ENCODE measurements at regions of chr5 and their contacts with region 1.

Region 1: GRCh38 chr5:95730730-95731570 is at the start of gene RHOBTB3:
- DNase-seq: peak; percentile 88
- H3K4me3 ChIP-seq: peak within 1 kb of the TSS; percentile 35 to 95 (median 74)
- H3K27ac ChIP-seq: peak within 1 kb of the TSS; percentile 56
- H3K4me1 ChIP-seq: peaks cover 47% of the 10 kb centered on the region
- H3K27me3 ChIP-seq: no peaks in the 10 kb centered on the region
- CTCF ChIP-seq: peak in 1 of 2 donors; percentile 1
- POLR2A ChIP-seq: peak; percentile 39
- total RNA-seq, gene RHOBTB3: 37.6 and 44.1 TPM in 2 replicates

Region 2: DNA sequence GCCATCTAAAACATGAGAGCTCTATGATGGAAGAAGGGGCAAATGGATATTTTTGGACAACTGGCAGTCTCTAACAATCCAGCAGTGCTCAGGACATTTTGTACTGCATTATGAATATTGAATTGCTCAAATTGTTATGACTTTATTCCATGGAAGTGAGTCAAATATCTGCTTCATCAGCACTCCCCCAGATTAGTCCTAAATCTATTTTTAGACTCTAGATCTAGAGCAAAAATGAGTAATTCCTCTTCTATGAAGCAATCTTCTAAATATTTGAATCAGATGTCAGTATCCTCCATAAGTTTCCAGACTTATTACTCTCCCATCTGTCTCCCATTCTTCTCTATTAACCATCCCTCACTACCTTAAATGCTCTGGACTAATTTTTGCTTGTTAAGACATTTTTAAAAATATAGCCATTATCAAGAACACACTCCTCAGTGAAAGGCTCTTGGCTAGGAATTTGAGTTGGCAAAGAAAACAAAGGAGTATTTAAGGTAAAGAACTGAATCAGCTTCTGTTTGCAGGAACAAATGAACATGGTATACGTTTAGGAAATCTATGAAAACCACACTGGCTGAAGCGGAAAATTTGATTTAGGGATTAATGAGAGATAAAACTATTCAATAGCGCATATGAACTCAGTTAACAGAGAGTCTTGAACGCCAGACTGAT is 747.0 kb before region 1 on chr5:
- CTCF ChIA-PET with region 1: no interaction called
- POLR2A ChIA-PET with region 1: no interaction called
- dilution Hi-C with region 1: no loop called
- intact Hi-C with region 1: no loop called
- DNase-seq: no peak
- H3K4me3 ChIP-seq: no peak overlapping the region
- H3K27ac ChIP-seq: no peak overlapping the region
- H3K4me1 ChIP-seq: peaks cover 3% of the 10 kb centered on the region
- H3K27me3 ChIP-seq: no peaks in the 10 kb centered on the region
- CTCF ChIP-seq: no peak
- POLR2A ChIP-seq: no peak

Region 3: DNA sequence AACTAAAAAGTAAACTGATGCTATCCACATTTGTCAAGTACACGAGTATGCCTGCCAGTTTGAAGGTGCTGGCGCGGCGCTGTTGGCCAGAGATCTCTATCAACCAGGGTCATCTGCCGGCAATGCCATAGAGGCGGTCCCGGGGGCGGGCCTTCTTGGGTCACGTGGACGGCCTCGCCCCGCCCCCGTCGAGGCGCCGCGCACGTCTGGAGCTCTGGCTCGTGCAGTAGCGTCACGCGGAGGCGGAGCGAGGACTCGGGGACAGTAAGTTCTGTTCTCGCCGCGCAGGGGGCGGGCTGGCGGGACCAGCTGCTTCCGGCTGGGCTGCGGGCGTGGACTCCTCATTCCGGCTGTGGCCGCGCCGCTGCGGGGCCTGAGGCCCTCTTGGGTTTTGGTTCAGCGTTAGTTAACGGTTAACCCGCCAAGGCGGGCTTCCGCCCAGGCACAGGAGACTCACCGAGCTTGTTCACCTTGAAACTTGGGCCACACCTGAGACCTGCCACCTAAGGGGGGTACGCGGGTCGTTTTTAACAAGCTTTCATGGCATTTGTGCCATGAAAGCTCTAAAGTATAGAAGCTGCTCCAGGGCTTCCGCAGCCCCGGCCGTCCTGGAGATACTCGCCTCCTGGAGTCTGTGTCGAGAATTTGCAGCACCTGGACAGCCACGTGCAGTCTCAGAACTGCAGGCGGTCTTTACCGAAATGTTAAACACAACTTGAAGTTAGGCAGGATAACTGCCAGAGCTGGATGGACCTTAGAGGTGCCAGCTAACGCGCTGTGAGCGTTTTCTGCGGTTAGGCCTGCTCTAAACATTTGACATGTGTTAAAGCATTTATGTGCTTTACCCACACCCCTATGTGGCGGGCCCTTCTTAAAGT is 84.2 kb before region 1 on chr5 and contains the start of gene RFESD:
- CTCF ChIA-PET with region 1: interaction called, 4 read pairs
- POLR2A ChIA-PET with region 1: interaction called, 6 read pairs
- dilution Hi-C with region 1: no loop called
- intact Hi-C with region 1: loop called (anchors 1 kb)
- DNase-seq: peak; percentile 89
- H3K4me3 ChIP-seq: peak within 1 kb of the TSS; percentile 61 to 75 (median 67)
- H3K27ac ChIP-seq: peak within 1 kb of the TSS; percentile 91
- H3K4me1 ChIP-seq: peaks cover 9% of the 10 kb centered on the region
- H3K27me3 ChIP-seq: no peaks in the 10 kb centered on the region
- CTCF ChIP-seq: peak in 1 of 2 donors; percentile 2
- POLR2A ChIP-seq: peak; percentile 86
- total RNA-seq, gene RFESD: 1.1 and 2.0 TPM in 2 replicates

Region 4: DNA sequence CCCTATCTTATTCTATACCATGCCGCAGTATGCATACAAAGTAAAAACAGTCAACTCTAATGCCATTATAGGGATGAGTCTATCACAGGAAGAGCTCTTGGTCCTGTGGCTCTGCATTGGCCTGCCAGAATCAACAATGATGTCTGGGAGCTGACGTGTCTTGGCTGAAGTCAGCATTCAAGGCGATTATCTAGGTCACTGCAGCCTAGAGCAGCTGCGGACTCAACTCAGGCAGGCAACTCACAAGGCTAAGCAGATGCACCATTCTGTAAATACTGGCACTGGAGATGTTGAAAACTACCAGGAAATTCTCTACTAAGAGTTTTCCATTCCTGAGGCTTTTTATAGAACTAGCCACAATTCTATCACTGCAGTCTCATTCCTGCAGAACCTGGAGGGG is 61.4 kb before region 1 on chr5:
- CTCF ChIA-PET with region 1: interaction called, 18 read pairs
- POLR2A ChIA-PET with region 1: interaction called, 4 read pairs
- dilution Hi-C with region 1: no loop called
- intact Hi-C with region 1: loop called (anchors 1 kb)
- DNase-seq: peak; percentile 84
- H3K4me3 ChIP-seq: no peak overlapping the region
- H3K27ac ChIP-seq: peak overlapping the region; percentile 69
- H3K4me1 ChIP-seq: peaks cover 23% of the 10 kb centered on the region
- H3K27me3 ChIP-seq: no peaks in the 10 kb centered on the region
- CTCF ChIP-seq: no peak
- POLR2A ChIP-seq: no peak

Region 5: GRCh38 chr5:95760273-95761191 is 29.6 kb after region 1 on chr5:
- CTCF ChIA-PET with region 1: interaction called, 7 read pairs
- POLR2A ChIA-PET with region 1: interaction called, 6 read pairs
- dilution Hi-C with region 1: no loop called
- intact Hi-C with region 1: loop called (anchors 2 kb)
- DNase-seq: peak; percentile 78
- H3K4me3 ChIP-seq: peak overlapping the region in 1 of 3 experiments; percentile 17
- H3K27ac ChIP-seq: peak overlapping the region; percentile 78
- H3K4me1 ChIP-seq: peaks cover 36% of the 10 kb centered on the region
- H3K27me3 ChIP-seq: no peaks in the 10 kb centered on the region
- CTCF ChIP-seq: no peak
- POLR2A ChIP-seq: no peak

Region 6: DNA sequence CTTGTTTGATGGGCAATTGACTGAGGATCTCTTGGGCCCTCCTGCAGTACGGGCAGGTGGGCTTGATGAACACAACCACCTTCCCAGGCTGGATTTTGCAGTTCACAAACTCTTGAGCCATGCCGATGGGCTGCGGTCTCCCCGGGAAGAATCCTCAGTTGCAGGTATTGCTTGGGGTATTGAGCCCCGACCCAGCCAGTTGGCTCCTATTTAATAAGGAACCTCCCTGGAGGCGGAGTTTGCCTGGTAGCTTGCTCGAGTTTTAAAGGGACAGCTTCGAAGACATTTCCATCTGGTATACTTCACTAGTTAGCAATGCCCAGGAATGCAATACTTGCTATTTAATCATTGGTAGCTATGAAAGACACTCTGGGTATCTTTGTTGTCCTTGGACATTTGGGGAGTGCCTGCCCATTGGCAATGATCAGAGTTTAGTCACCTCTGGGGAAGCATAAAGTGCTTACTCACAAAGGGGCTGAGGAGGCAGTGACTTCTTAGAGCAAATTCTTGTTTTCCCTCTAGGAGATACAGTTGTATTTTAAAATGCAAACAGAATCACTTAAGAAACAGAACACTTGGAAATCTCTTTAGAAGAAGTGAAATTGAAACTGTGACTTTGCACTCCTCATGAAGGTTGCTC is 91.7 kb after region 1 on chr5 and contains the start of gene GLRX:
- CTCF ChIA-PET with region 1: no interaction called
- POLR2A ChIA-PET with region 1: interaction called, 4 read pairs
- dilution Hi-C with region 1: no loop called
- intact Hi-C with region 1: loop called (anchors 5 kb)
- DNase-seq: peak; percentile 82
- H3K4me3 ChIP-seq: peak within 1 kb of the TSS; percentile 63 to 80 (median 69)
- H3K27ac ChIP-seq: peak within 1 kb of the TSS; percentile 54
- H3K4me1 ChIP-seq: peaks cover 26% of the 10 kb centered on the region
- H3K27me3 ChIP-seq: no peaks in the 10 kb centered on the region
- CTCF ChIP-seq: no peak
- POLR2A ChIP-seq: peak; percentile 42
- total RNA-seq, gene GLRX: 13.3 and 14.2 TPM in 2 replicates

Region 7: GRCh38 chr5:95961617-95962474 is 230.9 kb after region 1 on chr5 and contains the start of gene ELL2:
- CTCF ChIA-PET with region 1: no interaction called
- POLR2A ChIA-PET with region 1: no interaction called
- dilution Hi-C with region 1: no loop called
- intact Hi-C with region 1: loop called (anchors 5 kb)
- DNase-seq: peak; percentile 98
- H3K4me3 ChIP-seq: peak within 1 kb of the TSS; percentile 66 to 94 (median 79)
- H3K27ac ChIP-seq: peak within 1 kb of the TSS; percentile 88
- H3K4me1 ChIP-seq: peaks cover 12% of the 10 kb centered on the region
- H3K27me3 ChIP-seq: no peaks in the 10 kb centered on the region
- CTCF ChIP-seq: no peak
- POLR2A ChIP-seq: peak; percentile 68
- total RNA-seq, gene ELL2: 26.0 and 39.8 TPM in 2 replicates